MCF 10A (cell line): ENCODE measurements at regions of chr9 and their contacts with region 1.

Region 1: DNA sequence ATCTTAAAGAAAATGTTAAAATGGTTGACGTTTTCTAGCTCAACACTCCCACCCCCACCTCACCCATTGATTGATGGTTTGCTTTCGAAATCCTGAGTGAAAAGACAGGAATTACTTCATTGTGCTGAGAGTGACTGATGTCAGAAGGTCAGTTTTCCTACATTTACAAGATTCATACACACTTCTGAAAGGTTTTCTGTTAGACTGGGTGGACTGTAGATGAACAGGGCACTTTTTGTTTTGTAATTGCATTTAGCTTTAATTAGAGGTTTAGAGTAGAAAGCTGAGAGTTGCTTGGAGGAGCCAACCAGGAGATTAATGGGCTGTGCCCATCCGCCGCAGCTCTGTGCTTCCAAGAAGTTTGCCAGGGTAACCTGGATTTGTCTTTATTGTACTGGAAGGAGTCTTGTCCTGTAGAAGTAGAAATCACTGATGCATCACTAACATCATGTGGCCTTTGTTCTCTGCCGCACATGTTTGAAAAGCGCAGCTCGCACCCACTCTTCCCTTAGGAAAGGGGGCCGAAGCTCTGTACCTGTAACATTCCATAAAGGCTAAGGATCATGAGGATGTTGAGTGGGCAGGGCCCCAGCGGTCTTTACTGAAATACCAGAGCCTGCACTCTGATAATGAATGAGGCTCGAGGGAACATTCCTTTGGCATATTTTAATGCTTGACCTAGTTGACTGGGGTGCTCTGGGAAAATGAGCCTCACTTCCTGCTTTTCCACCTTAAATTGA is 267.7 kb upstream of the DMRT1 start:
- DNase-seq: no peak
- H3K4me3 Mint-ChIP-seq: no peak overlapping the region
- H3K27ac Mint-ChIP-seq: no peak overlapping the region
- H3K4me1 Mint-ChIP-seq: peaks cover 15% of the 10 kb centered on the region
- H3K27me3 Mint-ChIP-seq: no peaks in the 10 kb centered on the region
- CTCF ChIP-seq: no peak

Region 2: DNA sequence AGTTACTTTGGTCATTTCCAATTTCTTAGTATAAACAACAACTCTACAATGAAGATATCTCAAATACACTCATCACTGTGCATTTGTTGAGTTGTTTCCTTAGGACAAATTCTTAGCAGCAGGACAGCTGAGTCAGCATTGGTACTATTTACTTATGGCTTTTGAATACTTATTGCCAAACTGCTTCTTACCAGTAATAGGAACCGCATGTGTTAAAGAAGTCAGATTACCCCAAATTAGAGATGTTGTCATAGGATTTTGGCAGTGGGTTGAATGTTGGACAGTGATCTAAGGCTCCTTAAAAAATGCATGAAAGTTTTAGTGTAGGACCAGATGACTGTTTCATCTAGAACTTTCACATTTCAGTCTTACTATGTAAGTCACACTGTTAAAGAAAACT is 12.4 kb before region 1 on chr9:
- CTCF ChIA-PET with region 1: interaction called, 3 read pairs
- POLR2A ChIA-PET with region 1: interaction called, 74 read pairs
- intact Hi-C with region 1: no loop called
- DNase-seq: peak; percentile 68
- H3K4me3 Mint-ChIP-seq: peak overlapping the region; percentile 10
- H3K27ac Mint-ChIP-seq: peak overlapping the region; percentile 79
- H3K4me1 Mint-ChIP-seq: peaks cover 48% of the 10 kb centered on the region
- H3K27me3 Mint-ChIP-seq: no peaks in the 10 kb centered on the region
- CTCF ChIP-seq: no peak

Region 3: GRCh38 chr9:1775230-1775629 is 1201.4 kb after region 1 on chr9:
- CTCF ChIA-PET with region 1: no interaction called
- POLR2A ChIA-PET with region 1: no interaction called
- intact Hi-C with region 1: no loop called
- DNase-seq: no peak
- H3K4me3 Mint-ChIP-seq: no peak overlapping the region
- H3K27ac Mint-ChIP-seq: no peak overlapping the region
- H3K4me1 Mint-ChIP-seq: no peaks in the 10 kb centered on the region
- H3K27me3 Mint-ChIP-seq: no peaks in the 10 kb centered on the region
- CTCF ChIP-seq: no peak